Activated T-helper 2 cell treated with anti-CD3 and anti-CD28 coated beads, Interferon-gamma antibody, Interleukin-2, Interleukin-4, amounts not matched to agents 10 μg/mL and 5 μg/mL and 100 μg/mL, durations not matched to agents 14 hours and 24 hours and 36 hours (primary cell): ENCODE measurements at regions of chr1 and their contacts with region 1.

Region 1: GRCh38 chr1:9724706-9725476 is 73.4 kb downstream of the PIK3CD start:
- DNase-seq: peak; percentile 58
- H3K4me3 Mint-ChIP-seq: no peak overlapping the region
- H3K27ac Mint-ChIP-seq: peak overlapping the region; percentile 62
- H3K4me1 Mint-ChIP-seq: peaks cover 32% of the 10 kb centered on the region
- H3K27me3 Mint-ChIP-seq: no peaks in the 10 kb centered on the region

Region 2: GRCh38 chr1:9651565-9652378 is 73.1 kb before region 1 on chr1 and contains the start of gene PIK3CD:
- intact Hi-C with region 1: loop called (anchors 2 kb)
- DNase-seq: peak; percentile 25
- H3K4me3 Mint-ChIP-seq: peak within 1 kb of the TSS; percentile 96
- H3K27ac Mint-ChIP-seq: peak within 1 kb of the TSS; percentile 92
- H3K4me1 Mint-ChIP-seq: peaks cover 47% of the 10 kb centered on the region
- H3K27me3 Mint-ChIP-seq: no peaks in the 10 kb centered on the region
- total RNA-seq, gene PIK3CD: 184 and 189 TPM in 2 replicates

Region 3: DNA sequence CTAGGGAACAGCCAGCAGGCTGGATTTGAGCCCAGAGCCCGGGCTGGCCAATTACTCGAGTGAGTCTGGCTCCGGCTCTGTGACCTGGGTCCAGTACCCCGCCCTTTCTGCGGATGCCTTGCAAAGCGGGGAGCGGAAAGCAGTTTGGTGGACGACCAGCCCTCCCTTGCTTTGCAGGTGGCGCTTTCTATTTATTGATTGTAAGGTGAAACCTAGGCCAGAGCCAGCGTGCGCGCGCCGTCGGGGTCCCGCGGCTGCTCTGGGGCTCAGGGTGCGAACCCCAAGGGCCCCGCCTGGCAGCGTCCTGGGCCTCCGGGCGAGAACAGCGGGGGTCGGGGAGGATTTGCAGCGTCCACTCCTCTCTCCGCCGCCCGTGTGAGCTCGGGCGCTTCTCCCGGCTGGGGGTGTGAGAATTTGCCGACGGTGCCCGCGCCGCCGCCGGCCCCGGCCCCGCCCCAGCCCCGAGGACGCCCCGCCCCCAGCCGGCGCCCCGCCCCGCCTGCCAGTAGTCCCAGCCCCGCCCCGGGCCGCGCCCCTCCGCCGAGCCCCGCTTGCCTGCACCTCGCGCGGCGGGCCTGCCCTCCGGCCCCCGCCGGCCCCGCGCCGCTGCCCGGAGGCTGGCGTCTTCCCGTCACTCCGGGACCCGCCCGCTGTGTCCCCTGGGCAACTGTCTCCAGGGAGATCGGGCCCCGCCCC is 35.7 kb before region 1 on chr1:
- intact Hi-C with region 1: loop called (anchors 5 kb)
- DNase-seq: peak; percentile 74
- H3K4me3 Mint-ChIP-seq: peak overlapping the region; percentile 65
- H3K27ac Mint-ChIP-seq: no peak overlapping the region
- H3K4me1 Mint-ChIP-seq: peaks cover 57% of the 10 kb centered on the region
- H3K27me3 Mint-ChIP-seq: no peaks in the 10 kb centered on the region

Region 4: DNA sequence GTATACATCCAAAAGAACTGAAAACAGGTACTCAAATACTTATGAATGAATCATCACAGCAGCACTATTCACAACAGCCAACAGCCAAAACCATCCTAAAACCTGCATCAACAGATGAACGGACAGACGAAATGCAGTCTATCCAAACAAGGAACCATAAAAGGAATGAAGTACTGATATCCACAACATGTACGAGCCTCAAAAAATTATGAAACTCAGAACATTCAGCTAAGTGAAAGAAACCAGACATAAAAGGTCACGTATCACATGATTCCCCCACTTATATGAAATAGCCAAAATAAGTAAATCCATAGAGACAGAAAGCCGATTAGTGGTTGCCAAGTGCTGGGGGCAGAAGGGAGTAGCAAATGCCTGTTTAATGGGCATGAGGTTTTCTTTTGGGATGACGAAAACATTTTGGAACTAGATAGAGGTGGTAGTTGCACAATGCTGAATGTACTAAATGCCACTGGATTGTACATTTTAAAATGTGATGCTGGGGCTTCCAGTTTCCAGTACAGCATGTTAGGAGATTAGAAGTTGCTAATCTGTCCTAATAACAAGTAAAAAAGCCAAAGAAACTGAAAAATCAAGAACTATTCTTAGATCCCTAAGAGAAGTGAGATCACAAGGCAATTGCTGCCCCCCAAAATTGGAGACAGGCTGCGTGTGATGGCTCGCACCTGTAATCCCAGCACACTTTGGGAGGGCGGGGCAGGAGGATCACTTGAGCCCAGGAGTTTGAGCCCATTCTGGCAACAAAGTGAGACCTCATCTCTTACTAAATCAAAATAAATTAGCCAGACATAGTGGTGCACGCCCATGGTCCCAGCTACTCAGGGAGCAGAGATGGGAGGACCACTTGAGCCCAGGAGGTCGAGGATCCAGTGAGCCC is 73.6 kb after region 1 on chr1:
- intact Hi-C with region 1: loop called (anchors 5 kb)
- DNase-seq: no peak
- H3K4me3 Mint-ChIP-seq: no peak overlapping the region
- H3K27ac Mint-ChIP-seq: peak overlapping the region; percentile 27
- H3K4me1 Mint-ChIP-seq: peaks cover 40% of the 10 kb centered on the region
- H3K27me3 Mint-ChIP-seq: peaks cover 8% of the 10 kb centered on the region

Region 5: DNA sequence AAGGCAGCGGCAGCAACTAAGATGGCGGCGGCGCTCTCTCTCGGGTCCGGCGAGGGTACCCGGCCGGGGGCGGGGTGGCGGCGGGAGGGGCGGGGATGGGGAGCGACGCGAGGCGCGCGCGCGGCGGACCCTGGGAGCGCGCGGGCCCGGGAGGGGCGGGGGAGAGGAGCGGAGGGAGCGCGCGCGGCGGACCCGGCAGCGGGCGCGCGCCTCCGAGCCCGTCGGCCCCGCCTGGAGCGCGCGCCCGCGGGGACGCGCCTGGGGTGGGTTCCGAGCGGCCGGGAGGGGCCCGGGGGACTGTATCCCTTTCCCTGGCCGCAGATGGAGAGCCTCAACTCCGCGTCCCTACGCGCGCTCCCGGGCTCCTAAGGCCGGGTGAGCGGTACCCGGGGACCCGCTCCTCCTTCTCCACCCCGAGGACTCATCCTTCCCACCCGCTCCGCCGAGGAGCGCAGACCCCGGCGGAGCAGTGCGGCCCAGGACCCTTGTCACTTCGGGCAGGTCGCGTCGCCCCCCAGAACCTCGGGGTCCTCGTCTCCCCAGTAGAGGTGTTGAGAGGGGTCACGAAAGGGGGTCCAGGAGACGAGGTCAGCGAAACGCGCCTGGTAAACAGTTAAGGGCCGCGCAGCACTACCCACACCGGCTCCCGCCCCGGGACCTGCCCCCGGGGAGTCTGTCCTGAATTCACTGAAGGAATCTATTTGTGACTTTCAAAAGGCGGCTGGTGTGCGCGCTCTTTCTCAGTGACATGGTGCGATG is 99.2 kb after region 1 on chr1 and contains the start of gene CLSTN1:
- intact Hi-C with region 1: loop called (anchors 5 kb)
- DNase-seq: peak; percentile 84
- H3K4me3 Mint-ChIP-seq: peak within 1 kb of the TSS; percentile 90
- H3K27ac Mint-ChIP-seq: peak within 1 kb of the TSS; percentile 73
- H3K4me1 Mint-ChIP-seq: peaks cover 31% of the 10 kb centered on the region
- H3K27me3 Mint-ChIP-seq: peaks cover 15% of the 10 kb centered on the region
- total RNA-seq, gene CLSTN1: 46.5 and 48.8 TPM in 2 replicates

Region 6: GRCh38 chr1:9867408-9868243 is 142.7 kb after region 1 on chr1:
- intact Hi-C with region 1: loop called (anchors 10 kb)
- DNase-seq: peak; percentile 77
- H3K4me3 Mint-ChIP-seq: no peak overlapping the region
- H3K27ac Mint-ChIP-seq: no peak overlapping the region
- H3K4me1 Mint-ChIP-seq: peaks cover 4% of the 10 kb centered on the region
- H3K27me3 Mint-ChIP-seq: no peaks in the 10 kb centered on the region